ENCODE measurements at regions of chr15 and their contacts with region 1.

Region 1: GRCh38 chr15:50576166-50576565 is 29.7 kb upstream of the USP50 start:
- DNase-seq: no peak
- ATAC-seq: no peak
- H3K4me3 ChIP-seq: no peak overlapping the region
- H3K27ac ChIP-seq: no peak overlapping the region
- H3K4me1 ChIP-seq: no peaks in the 10 kb centered on the region
- H3K27me3 ChIP-seq: no peaks in the 10 kb centered on the region
- CTCF ChIP-seq: no peak

Region 2: GRCh38 chr15:50484781-50485180 is 91.4 kb before region 1 on chr15:
- intact Hi-C with region 1: loop called in 1 of 2 experiments (anchors 5 kb)
- DNase-seq: no peak
- ATAC-seq: no peak
- H3K4me3 ChIP-seq: no peak overlapping the region
- H3K27ac ChIP-seq: no peak overlapping the region
- H3K4me1 ChIP-seq: no peaks in the 10 kb centered on the region
- H3K27me3 ChIP-seq: no peaks in the 10 kb centered on the region
- CTCF ChIP-seq: no peak

Region 3: DNA sequence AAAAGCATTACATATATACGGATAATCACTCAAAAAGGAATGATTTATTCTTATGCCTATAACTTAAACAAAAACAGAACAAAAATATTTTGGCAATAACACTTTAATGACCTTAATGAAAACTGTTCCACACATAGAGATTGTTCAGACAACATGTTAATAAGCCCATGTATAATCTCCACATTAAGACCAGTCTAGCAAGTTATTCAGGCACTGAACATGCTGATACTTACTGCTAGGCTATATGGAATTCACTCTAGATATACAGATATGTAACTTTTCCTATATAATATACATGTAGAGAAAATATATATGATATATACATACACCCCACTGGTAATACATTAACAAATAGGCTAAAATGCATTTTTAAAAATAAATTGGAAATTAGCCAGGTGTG is 14.1 kb after region 1 on chr15:
- intact Hi-C with region 1: loop called in 1 of 2 experiments (anchors 1 kb)
- DNase-seq: no peak
- ATAC-seq: no peak
- H3K4me3 ChIP-seq: no peak overlapping the region
- H3K27ac ChIP-seq: no peak overlapping the region
- H3K4me1 ChIP-seq: no peaks in the 10 kb centered on the region
- H3K27me3 ChIP-seq: no peaks in the 10 kb centered on the region
- CTCF ChIP-seq: no peak

Measured in psoas muscle (tissue), 8 donors.